Activated T-helper 2 cell treated with anti-CD3 and anti-CD28 coated beads, Interferon-gamma antibody, Interleukin-2, Interleukin-4, amounts not matched to agents 10 μg/mL and 5 μg/mL and 100 μg/mL, durations not matched to agents 14 hours and 24 hours and 36 hours (primary cell): ENCODE measurements at regions of chr2 and their contacts with region 1.

Region 1: GRCh38 chr2:7930800-7931635 is 750.8 kb upstream of the ID2 start:
- DNase-seq: no peak
- H3K4me3 Mint-ChIP-seq: peak overlapping the region; percentile 17
- H3K27ac Mint-ChIP-seq: peak overlapping the region; percentile 85
- H3K4me1 Mint-ChIP-seq: peaks cover 36% of the 10 kb centered on the region
- H3K27me3 Mint-ChIP-seq: no peaks in the 10 kb centered on the region

Region 2: DNA sequence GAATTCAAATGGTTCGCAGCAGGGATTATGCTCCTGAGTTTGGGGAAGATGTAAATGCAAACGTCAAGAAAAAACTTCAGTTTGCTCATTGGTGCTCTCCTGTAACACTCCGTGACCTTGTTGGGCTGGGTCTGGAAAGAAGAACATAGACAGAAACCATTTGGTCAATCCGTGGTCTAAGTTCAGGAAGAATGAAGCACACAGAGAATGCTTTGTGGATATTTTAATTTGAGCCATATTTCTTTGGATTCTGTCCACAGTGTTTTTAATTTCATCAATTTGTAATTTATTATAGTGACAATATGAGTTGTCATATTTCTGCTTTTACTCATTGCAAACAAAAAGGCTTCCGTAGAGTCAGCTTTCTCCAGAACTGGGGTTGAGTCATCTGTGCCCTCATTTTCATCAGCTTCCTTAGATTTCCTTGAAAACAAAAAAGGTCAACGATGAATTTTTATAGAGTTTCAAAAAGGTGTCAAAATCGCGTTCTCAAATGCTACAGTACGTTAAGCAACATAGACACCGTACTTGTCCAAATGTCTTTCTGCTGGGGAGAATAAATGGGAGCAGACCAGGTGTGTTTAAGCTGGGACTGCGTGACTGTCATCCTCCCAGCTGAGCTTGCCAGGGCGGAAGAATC is 407.4 kb before region 1 on chr2:
- intact Hi-C with region 1: loop called (anchors 5 kb)
- DNase-seq: no peak
- H3K4me3 Mint-ChIP-seq: peak overlapping the region; percentile 46
- H3K27ac Mint-ChIP-seq: peak overlapping the region; percentile 88
- H3K4me1 Mint-ChIP-seq: peaks cover 69% of the 10 kb centered on the region
- H3K27me3 Mint-ChIP-seq: no peaks in the 10 kb centered on the region

Region 3: DNA sequence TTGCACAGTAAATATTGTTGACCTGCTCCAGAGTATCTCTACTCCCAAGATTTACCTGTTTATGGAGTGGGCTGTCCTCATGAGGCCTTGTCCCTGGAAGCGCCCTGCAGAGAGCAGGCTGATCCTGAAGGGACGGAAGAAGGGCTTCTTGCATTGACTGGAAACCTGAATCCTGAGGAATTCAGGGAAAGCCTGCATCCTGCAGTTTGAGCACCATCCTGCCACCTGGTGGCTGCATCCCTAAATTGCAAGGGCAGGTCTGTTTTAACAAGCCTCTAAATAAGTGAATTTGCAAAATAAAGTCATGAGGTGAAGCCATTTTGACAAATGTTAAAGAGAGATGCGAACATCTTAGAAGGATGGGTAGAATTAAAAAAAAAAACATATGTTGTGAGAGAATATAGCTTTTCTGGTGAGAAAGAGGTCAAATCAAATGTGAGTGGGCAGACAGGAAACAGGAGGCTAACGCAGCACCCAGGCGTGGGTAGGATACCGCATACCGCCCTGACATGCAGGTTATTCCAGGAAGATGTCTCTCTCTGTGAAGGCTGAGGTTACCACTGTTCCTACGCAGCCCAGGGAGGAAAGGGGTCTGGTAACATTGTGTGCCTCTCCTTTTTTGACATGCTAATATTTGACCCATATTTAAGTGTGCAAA is 258.9 kb before region 1 on chr2:
- intact Hi-C with region 1: loop called (anchors 5 kb)
- DNase-seq: peak; percentile 51
- H3K4me3 Mint-ChIP-seq: peak overlapping the region; percentile 63
- H3K27ac Mint-ChIP-seq: peak overlapping the region; percentile 97
- H3K4me1 Mint-ChIP-seq: peaks cover 60% of the 10 kb centered on the region
- H3K27me3 Mint-ChIP-seq: no peaks in the 10 kb centered on the region

Region 4: GRCh38 chr2:7943446-7943845 is 12.4 kb after region 1 on chr2:
- intact Hi-C with region 1: loop called (anchors 1 kb)
- DNase-seq: no peak
- H3K4me3 Mint-ChIP-seq: no peak overlapping the region
- H3K27ac Mint-ChIP-seq: no peak overlapping the region
- H3K4me1 Mint-ChIP-seq: peaks cover 22% of the 10 kb centered on the region
- H3K27me3 Mint-ChIP-seq: no peaks in the 10 kb centered on the region

Region 5: GRCh38 chr2:8049851-8050571 is 119.0 kb after region 1 on chr2:
- intact Hi-C with region 1: loop called (anchors 1 kb)
- DNase-seq: peak; percentile 63
- H3K4me3 Mint-ChIP-seq: peak overlapping the region; percentile 30
- H3K27ac Mint-ChIP-seq: peak overlapping the region; percentile 86
- H3K4me1 Mint-ChIP-seq: peaks cover 53% of the 10 kb centered on the region
- H3K27me3 Mint-ChIP-seq: no peaks in the 10 kb centered on the region

Region 6: GRCh38 chr2:8303322-8303832 is 372.4 kb after region 1 on chr2:
- intact Hi-C with region 1: loop called (anchors 5 kb)
- DNase-seq: peak; percentile 82
- H3K4me3 Mint-ChIP-seq: peak overlapping the region; percentile 49
- H3K27ac Mint-ChIP-seq: peak overlapping the region; percentile 47
- H3K4me1 Mint-ChIP-seq: peaks cover 81% of the 10 kb centered on the region
- H3K27me3 Mint-ChIP-seq: no peaks in the 10 kb centered on the region